ENCODE measurements at regions of chr1 and their contacts with region 1.

Region 1: GRCh38 chr1:26787706-26788514 is at the start of gene PIGV:
- DNase-seq: peak; percentile 82 to 93 (median 89)
- H3K4me3 ChIP-seq: peak within 1 kb of the TSS; percentile 92
- H3K4me3 Mint-ChIP-seq: peak within 1 kb of the TSS; percentile 90 to 100 (median 100)
- H3K27ac ChIP-seq: peak within 1 kb of the TSS; percentile 88
- H3K27ac Mint-ChIP-seq: peak within 1 kb of the TSS; percentile 100
- H3K4me1 ChIP-seq: peaks cover 71% of the 10 kb centered on the region
- H3K4me1 Mint-ChIP-seq: peaks cover 73 to 87% (median 81%) of the 10 kb centered on the region in 3 donors
- H3K27me3 ChIP-seq: no peaks in the 10 kb centered on the region
- H3K27me3 Mint-ChIP-seq: peaks cover 0 to 5% of the 10 kb centered on the region in 2 donors
- total RNA-seq, gene PIGV: 23.6 to 24.9 TPM

Region 2: GRCh38 chr1:26336477-26337205 is 451.3 kb before region 1 on chr1:
- CTCF ChIA-PET with region 1: no interaction called
- POLR2A ChIA-PET with region 1: no interaction called
- DNase-seq: peak; percentile 75 to 89 (median 83)
- H3K4me3 ChIP-seq: peak overlapping the region; percentile 68
- H3K4me3 Mint-ChIP-seq: peak overlapping the region; percentile 86 to 95 (median 90)
- H3K27ac ChIP-seq: peak overlapping the region; percentile 67
- H3K27ac Mint-ChIP-seq: peak overlapping the region in 2 of 8 donors; percentile 58 to 70
- H3K4me1 ChIP-seq: peaks cover 6% of the 10 kb centered on the region
- H3K4me1 Mint-ChIP-seq: peaks cover 10 to 25% (median 15%) of the 10 kb centered on the region in 3 donors
- H3K27me3 ChIP-seq: no peaks in the 10 kb centered on the region
- H3K27me3 Mint-ChIP-seq: no peaks in the 10 kb centered on the region

Region 3: GRCh38 chr1:26431979-26432695 is 355.8 kb before region 1 on chr1 and contains the start of gene DHDDS:
- CTCF ChIA-PET with region 1: no interaction called
- POLR2A ChIA-PET with region 1: no interaction called
- DNase-seq: peak; percentile 96 to 98 (median 97)
- H3K4me3 ChIP-seq: peak within 1 kb of the TSS; percentile 69
- H3K4me3 Mint-ChIP-seq: peak within 1 kb of the TSS; percentile 90 to 98 (median 94)
- H3K27ac ChIP-seq: peak within 1 kb of the TSS; percentile 70
- H3K27ac Mint-ChIP-seq: peak within 1 kb of the TSS; percentile 75 to 99 (median 96)
- H3K4me1 ChIP-seq: peaks cover 19% of the 10 kb centered on the region
- H3K4me1 Mint-ChIP-seq: peaks cover 19 to 24% (median 24%) of the 10 kb centered on the region in 3 donors
- H3K27me3 ChIP-seq: no peaks in the 10 kb centered on the region
- H3K27me3 Mint-ChIP-seq: peaks cover 0 to 6% of the 10 kb centered on the region in 2 donors
- total RNA-seq, gene DHDDS: 47.9 to 52.2 TPM

Region 4: DNA sequence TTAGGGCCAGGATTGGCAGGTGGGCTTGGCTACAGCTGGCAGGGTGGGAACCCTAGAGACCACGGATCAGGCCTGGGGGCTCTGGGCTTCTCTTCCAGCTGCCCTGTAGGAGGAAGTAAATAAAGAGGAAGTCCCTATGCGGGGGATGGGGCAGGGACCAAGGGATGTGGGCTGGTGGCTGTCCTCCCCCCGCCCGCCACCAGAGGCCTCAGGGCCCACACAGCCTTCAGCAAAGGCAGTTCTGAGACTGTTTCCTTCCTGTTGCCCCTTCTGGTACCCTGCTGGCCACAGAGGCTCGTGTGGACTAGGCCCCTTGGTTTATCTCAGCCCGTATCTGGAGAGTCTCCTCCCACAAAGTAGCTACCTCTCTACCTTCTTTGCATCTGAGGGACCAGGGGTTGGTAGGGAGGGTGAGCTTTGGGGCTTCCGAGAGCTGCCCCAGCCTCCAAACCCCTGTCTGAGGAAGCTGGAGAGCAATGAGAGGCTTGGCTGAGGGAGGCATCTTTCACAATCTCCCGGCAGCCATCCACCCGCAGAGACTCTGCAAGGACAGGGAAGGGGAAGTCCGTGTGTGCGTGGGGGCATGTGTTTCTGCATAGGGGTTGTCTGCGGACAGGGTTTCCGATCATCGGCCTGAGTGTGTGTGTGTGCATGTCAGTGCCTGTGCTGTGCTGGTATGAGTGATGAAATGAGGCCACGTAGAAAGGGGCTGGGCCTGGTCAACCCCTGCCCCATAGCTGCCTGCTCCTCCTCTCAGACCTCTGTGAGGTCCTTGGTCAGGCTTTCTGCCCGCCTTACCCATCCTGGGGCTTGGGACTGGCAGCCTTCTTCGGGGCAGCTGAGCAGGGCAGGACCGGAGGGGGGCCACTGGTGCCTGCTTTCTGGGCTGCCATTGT is 245.8 kb before region 1 on chr1:
- CTCF ChIA-PET with region 1: interaction called, 10 read pairs
- POLR2A ChIA-PET with region 1: no interaction called
- DNase-seq: peak; percentile 57 to 85 (median 73)
- H3K4me3 ChIP-seq: peak overlapping the region; percentile 61
- H3K4me3 Mint-ChIP-seq: peak overlapping the region; percentile 60 to 84 (median 81)
- H3K27ac ChIP-seq: peak overlapping the region; percentile 80
- H3K27ac Mint-ChIP-seq: peak overlapping the region; percentile 94 to 98 (median 97)
- H3K4me1 ChIP-seq: peaks cover 88% of the 10 kb centered on the region
- H3K4me1 Mint-ChIP-seq: peaks cover 79 to 92% (median 87%) of the 10 kb centered on the region in 3 donors
- H3K27me3 ChIP-seq: no peaks in the 10 kb centered on the region
- H3K27me3 Mint-ChIP-seq: peaks cover 0 to 1% of the 10 kb centered on the region in 2 donors

Region 5: GRCh38 chr1:26684763-26685508 is 103.0 kb before region 1 on chr1:
- CTCF ChIA-PET with region 1: interaction called, 11 read pairs
- POLR2A ChIA-PET with region 1: no interaction called
- DNase-seq: no peak
- H3K4me3 ChIP-seq: no peak overlapping the region
- H3K4me3 Mint-ChIP-seq: no peak overlapping the region
- H3K27ac ChIP-seq: peak overlapping the region; percentile 75
- H3K27ac Mint-ChIP-seq: no peak overlapping the region
- H3K4me1 ChIP-seq: peaks cover 6% of the 10 kb centered on the region
- H3K4me1 Mint-ChIP-seq: peaks cover 5 to 13% (median 11%) of the 10 kb centered on the region in 3 donors
- H3K27me3 ChIP-seq: no peaks in the 10 kb centered on the region
- H3K27me3 Mint-ChIP-seq: no peaks in the 10 kb centered on the region

Region 6: GRCh38 chr1:26723013-26723991 is 64.6 kb before region 1 on chr1:
- CTCF ChIA-PET with region 1: interaction called, 19 read pairs
- POLR2A ChIA-PET with region 1: interaction called, 3 read pairs
- DNase-seq: peak; percentile 32 to 56 (median 44)
- H3K4me3 ChIP-seq: peak overlapping the region; percentile 42
- H3K4me3 Mint-ChIP-seq: peak overlapping the region; percentile 5 to 84 (median 73)
- H3K27ac ChIP-seq: no peak overlapping the region
- H3K27ac Mint-ChIP-seq: peak overlapping the region; percentile 38 to 94 (median 68)
- H3K4me1 ChIP-seq: peaks cover 91% of the 10 kb centered on the region
- H3K4me1 Mint-ChIP-seq: peaks cover 84 to 93% (median 89%) of the 10 kb centered on the region in 3 donors
- H3K27me3 ChIP-seq: no peaks in the 10 kb centered on the region
- H3K27me3 Mint-ChIP-seq: no peaks in the 10 kb centered on the region

Region 7: GRCh38 chr1:26771643-26772321 is 16.1 kb before region 1 on chr1:
- CTCF ChIA-PET with region 1: interaction called, 17 read pairs
- POLR2A ChIA-PET with region 1: interaction called, 3 read pairs
- DNase-seq: no peak
- H3K4me3 ChIP-seq: no peak overlapping the region
- H3K4me3 Mint-ChIP-seq: no peak overlapping the region
- H3K27ac ChIP-seq: peak overlapping the region; percentile 11
- H3K27ac Mint-ChIP-seq: peak overlapping the region; percentile 63 to 91 (median 78)
- H3K4me1 ChIP-seq: no peaks in the 10 kb centered on the region
- H3K4me1 Mint-ChIP-seq: peaks cover 3 to 24% (median 12%) of the 10 kb centered on the region in 3 donors
- H3K27me3 ChIP-seq: no peaks in the 10 kb centered on the region
- H3K27me3 Mint-ChIP-seq: peaks cover 0 to 3% of the 10 kb centered on the region in 2 donors

Region 8: GRCh38 chr1:26820784-26821269 is 32.9 kb after region 1 on chr1:
- CTCF ChIA-PET with region 1: interaction called, 17 read pairs
- POLR2A ChIA-PET with region 1: interaction called, 6 read pairs
- DNase-seq: peak in 2 of 5 donors; percentile 53 to 61
- H3K4me3 ChIP-seq: peak overlapping the region; percentile 26
- H3K4me3 Mint-ChIP-seq: peak overlapping the region; percentile 81 to 88 (median 84)
- H3K27ac ChIP-seq: no peak overlapping the region
- H3K27ac Mint-ChIP-seq: peak overlapping the region; percentile 87 to 95 (median 91)
- H3K4me1 ChIP-seq: peaks cover 22% of the 10 kb centered on the region
- H3K4me1 Mint-ChIP-seq: peaks cover 14 to 36% (median 25%) of the 10 kb centered on the region in 3 donors
- H3K27me3 ChIP-seq: no peaks in the 10 kb centered on the region
- H3K27me3 Mint-ChIP-seq: no peaks in the 10 kb centered on the region